Breast epithelium (tissue), 4 donors: ENCODE measurements at regions of chr3 and their contacts with region 1.

Region 1: GRCh38 chr3:24829629-24830229 is 335.1 kb upstream of the THRB start:
- DNase-seq: no peak
- H3K4me3 ChIP-seq: peak overlapping the region; percentile 34 to 77 (median 55)
- H3K27ac ChIP-seq: no peak overlapping the region
- H3K4me1 ChIP-seq: peaks cover 0 to 7% of the 10 kb centered on the region in 2 donors
- H3K27me3 ChIP-seq: peaks cover 0 to 4% of the 10 kb centered on the region in 2 donors
- CTCF ChIP-seq: no peak
- POLR2A ChIP-seq: no peak

Region 2: DNA sequence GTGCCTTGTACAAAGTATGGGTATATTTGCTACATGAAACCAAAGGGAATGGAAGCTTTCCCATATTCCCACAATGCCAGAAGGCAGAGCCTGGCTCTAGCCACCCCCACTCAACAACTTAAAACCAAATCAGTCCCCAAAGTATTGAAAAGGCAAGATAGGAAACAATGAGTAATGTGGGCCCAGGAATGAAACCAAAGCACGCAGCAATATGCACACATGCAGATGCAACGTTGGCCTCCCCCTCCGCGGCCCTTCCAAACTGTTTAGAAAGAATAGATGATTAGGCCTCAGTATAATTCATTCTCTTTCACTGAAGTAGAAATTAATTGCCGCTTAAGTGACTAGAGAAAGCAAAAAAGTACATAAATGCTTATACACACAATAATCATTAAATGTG is 394.1 kb before region 1 on chr3:
- intact Hi-C with region 1: no loop called
- DNase-seq: no peak
- H3K4me3 ChIP-seq: no peak overlapping the region
- H3K27ac ChIP-seq: no peak overlapping the region
- H3K4me1 ChIP-seq: no peaks in the 10 kb centered on the region
- H3K27me3 ChIP-seq: no peaks in the 10 kb centered on the region
- CTCF ChIP-seq: no peak
- POLR2A ChIP-seq: no peak

Region 3: DNA sequence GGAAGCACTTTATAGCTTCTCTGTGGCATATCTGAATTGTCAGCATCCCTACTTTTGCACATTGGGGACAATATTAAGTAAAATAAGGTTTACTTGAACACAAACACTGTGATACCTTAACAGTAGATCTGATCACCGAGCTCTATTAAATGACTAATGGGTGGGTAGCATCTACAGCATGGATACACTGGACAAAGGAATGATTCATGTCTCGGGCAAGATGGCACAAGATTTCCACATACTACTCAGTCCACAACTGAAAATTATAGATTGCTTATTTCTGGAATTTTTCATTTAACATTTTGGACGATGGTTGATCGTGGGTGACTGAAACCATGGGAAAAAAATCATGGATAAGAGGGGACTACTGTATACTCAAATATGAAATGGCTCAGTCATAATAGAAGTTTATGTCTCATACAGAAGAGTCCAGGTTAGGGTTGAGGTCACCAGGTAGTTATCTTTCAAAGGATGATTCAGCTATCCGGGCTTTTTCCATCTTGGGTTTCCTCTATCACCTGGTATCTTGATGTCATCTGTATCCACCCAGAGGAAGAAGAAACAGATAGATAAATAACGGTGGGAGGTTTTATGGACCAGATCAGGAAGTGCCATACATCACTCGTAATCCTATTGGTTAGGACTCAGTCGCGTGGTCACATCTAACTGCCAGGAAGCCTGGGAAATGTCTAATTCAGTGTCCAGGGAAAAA is 278.3 kb after region 1 on chr3:
- intact Hi-C with region 1: no loop called
- DNase-seq: no peak
- H3K4me3 ChIP-seq: no peak overlapping the region
- H3K27ac ChIP-seq: no peak overlapping the region
- H3K4me1 ChIP-seq: no peaks in the 10 kb centered on the region
- H3K27me3 ChIP-seq: no peaks in the 10 kb centered on the region
- CTCF ChIP-seq: no peak
- POLR2A ChIP-seq: no peak

Region 4: DNA sequence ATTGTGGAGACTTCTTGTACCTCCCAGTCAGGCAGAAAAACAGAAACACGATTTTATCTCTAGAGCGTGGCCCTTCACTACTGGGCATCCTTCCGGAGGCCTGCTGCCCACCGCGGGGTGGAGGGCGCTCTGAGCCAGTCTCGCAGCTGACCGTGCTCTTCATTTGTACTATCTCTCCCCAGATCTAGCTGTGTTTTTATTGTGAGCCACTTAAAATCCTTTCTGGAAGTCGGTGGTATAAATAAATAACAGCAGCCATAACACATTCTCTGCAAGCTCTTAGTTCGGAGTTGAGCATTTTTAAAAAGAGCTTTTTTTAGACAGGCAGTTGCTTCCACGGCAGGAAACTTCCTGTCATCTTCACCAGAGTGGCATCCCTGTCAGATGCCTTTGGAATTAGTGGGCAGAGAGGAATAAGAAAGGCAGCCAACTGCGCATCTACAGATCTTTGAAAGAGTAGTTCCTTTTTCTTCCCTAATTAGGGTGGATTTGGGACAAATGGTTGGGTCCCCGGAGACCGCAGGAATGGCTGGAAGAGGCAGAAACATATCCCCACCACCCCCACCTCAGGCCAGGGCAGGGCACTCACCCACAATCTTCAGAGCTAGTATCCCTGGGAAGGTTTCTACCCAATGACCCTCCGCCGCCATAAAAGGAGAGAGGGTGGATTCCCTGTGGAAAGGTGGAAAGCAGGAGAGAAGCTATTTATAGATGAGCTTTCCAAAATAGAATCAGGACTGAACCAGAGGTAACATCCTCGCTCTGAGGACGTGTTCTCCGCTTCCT is 743.9 kb after region 1 on chr3:
- intact Hi-C with region 1: loop called (anchors 5 kb)
- DNase-seq: no peak
- H3K4me3 ChIP-seq: peak overlapping the region in 1 of 3 donors; percentile 28
- H3K27ac ChIP-seq: peak overlapping the region; percentile 59 to 83
- H3K4me1 ChIP-seq: no peaks in the 10 kb centered on the region
- H3K27me3 ChIP-seq: no peaks in the 10 kb centered on the region
- CTCF ChIP-seq: no peak
- POLR2A ChIP-seq: no peak